HEK293 (cell line): ENCODE measurements at regions of chr7 and their contacts with region 1.

Region 1: GRCh38 chr7:73726083-73726466 is 6.6 kb upstream of the STX1A start:
- H3K4me3 ChIP-seq: no peak overlapping the region
- H3K27ac ChIP-seq: no peak overlapping the region
- H3K4me1 ChIP-seq: no peaks in the 10 kb centered on the region
- CTCF ChIP-seq: no peak

Region 2: GRCh38 chr7:73612598-73613269 is 113.3 kb before region 1 on chr7:
- CTCF ChIA-PET with region 1: interaction called, 82 read pairs
- POLR2A ChIA-PET with region 1: interaction called, 3 read pairs
- H3K4me3 ChIP-seq: no peak overlapping the region
- H3K27ac ChIP-seq: no peak overlapping the region; the same call in 1 of the 2 replicates
- H3K4me1 ChIP-seq: peaks cover 7% of the 10 kb centered on the region
- CTCF ChIP-seq: no peak

Region 3: DNA sequence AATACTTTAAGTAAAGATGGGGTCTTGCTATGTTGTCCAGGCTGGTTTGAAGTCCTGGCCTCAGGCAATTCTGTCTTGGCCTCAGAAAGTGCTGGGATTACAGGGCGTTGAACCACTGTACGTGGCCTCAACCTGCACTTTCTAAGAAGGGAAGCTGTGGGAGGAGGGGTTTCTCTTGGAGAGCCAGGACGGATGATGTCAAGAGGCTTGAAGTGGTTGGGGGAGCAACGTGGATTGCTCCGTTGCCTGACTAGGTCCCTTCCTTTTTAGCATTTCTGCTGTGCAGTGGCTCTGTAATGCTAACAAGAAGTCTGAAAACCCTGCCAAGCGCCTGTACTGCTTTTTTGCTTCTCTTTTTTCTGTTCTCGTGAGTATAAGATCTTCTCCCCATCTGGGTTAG is 35.4 kb before region 1 on chr7:
- CTCF ChIA-PET with region 1: no interaction called
- POLR2A ChIA-PET with region 1: no interaction called
- H3K4me3 ChIP-seq: no peak overlapping the region
- H3K27ac ChIP-seq: no peak overlapping the region
- H3K4me1 ChIP-seq: no peaks in the 10 kb centered on the region
- CTCF ChIP-seq: no peak

Region 4: GRCh38 chr7:73715648-73716317 is 10.3 kb before region 1 on chr7:
- CTCF ChIA-PET with region 1: interaction called, 15 read pairs
- POLR2A ChIA-PET with region 1: no interaction called
- H3K4me3 ChIP-seq: no peak overlapping the region
- H3K27ac ChIP-seq: peak overlapping the region; percentile 6
- H3K4me1 ChIP-seq: peaks cover 18% of the 10 kb centered on the region
- CTCF ChIP-seq: no peak